Activated T-helper 1 cell treated with anti-CD3 and anti-CD28 coated beads, Interleukin-12 subunit alpha, Interleukin-12 subunit beta, Interleukin-2, Interleukin-4 antibody, amounts not matched to agents 30 ng/mL and 10 ng/mL and 1 ng/mL, durations not matched to agents 14 hours and 24 hours and 36 hours (primary cell): ENCODE measurements at regions of chr11 and their contacts with region 1.

Region 1: DNA sequence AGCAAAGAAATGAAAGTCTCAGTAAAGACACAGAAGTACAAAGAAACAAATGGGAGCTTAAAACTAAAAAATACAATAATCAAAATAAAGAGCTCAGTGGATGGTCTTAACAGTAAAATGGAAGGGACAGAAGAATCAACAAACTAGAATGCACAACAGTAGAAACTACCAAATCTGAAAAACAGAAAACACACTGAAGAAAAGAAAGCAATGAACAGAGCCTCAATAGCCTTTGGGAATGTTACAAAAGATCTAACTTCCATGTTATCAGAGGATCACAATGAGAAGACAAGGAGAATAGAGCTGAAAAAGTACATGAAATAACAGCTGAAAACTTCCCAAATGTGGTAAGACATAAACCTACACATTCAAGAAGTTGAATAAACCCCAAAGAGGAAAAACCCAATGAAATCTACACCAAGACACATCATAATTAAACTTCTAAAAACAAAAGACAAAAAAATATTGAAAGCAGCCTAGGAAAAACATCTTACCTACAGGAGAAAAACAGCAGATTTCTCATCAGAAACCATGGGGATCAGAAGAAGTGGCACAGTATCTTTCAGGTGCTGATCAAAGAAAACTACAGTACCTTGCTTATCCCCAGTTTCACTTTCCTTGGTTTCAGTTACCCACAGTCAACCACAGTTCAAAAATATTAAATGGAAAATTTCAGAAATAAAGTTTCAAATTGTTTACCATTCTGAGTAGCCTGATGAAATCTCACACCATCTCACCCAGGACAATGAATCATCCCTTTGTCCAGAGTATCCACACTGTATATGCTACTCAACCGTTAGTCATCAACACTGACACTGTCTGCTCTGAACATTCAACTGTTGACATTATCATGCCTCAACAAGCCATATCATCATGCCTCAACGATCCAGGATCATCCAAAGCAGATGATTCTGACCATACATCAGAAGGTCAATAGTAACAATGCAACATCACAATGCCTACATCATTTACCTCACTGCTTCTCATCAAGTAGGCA is 22.2 kb downstream of the RRAS2 start:
- DNase-seq: no peak
- H3K4me3 Mint-ChIP-seq: no peak overlapping the region
- H3K27ac Mint-ChIP-seq: peak overlapping the region; percentile 82
- H3K4me1 Mint-ChIP-seq: peaks cover 58% of the 10 kb centered on the region
- H3K27me3 Mint-ChIP-seq: no peaks in the 10 kb centered on the region

Region 2: DNA sequence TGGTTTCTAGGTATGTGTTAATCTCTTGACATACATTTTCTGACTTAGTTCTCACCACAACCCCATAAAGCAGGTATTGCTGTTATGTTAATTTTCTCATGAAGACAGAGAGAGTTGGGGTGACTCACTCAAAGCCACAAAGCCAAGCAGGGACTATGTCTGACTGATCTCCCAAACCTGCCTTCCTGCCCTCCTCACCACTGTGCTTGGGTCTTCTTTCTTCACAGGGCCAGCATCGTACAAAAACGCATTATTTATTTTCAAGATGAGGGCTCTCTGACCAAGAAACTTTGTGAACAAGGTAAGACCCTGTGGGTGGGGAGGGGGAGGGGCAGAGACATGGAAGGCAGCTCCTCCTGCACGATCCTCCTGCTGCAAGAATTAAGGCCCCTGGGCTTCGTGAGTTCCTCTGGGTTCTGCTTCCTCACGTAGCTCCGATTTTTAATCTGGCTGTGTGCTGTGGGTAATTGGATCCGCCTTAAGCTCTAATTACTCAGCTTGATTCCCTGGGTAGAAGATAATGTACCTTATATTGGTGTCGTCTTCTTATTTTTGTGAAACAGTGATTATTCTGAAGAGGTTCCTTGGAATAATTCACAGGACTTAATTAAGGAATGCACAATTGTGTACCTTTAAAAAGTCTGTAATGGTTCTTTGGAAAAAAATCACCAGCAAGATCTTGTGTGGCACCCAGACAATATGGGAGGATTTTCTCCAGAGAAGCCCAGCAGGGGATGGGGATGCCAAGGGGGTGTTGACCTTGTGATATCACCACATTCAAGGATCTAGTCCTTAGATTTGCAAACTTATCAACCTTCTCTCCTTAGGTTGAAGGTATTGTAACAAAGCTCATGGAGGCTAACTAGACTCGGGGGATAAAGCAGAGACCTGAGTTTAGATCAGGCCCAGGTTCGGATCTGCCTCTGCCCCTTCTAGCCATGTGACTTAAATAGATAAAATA is 261.4 kb before region 1 on chr11:
- intact Hi-C with region 1: loop called (anchors 5 kb)
- DNase-seq: peak; percentile 46
- H3K4me3 Mint-ChIP-seq: no peak overlapping the region
- H3K27ac Mint-ChIP-seq: no peak overlapping the region
- H3K4me1 Mint-ChIP-seq: peaks cover 28% of the 10 kb centered on the region
- H3K27me3 Mint-ChIP-seq: peaks cover 21% of the 10 kb centered on the region

Region 3: GRCh38 chr11:14320020-14320419 is 16.8 kb before region 1 on chr11:
- intact Hi-C with region 1: loop called (anchors 1 kb)
- DNase-seq: peak; percentile 34
- H3K4me3 Mint-ChIP-seq: peak overlapping the region; percentile 50
- H3K27ac Mint-ChIP-seq: peak overlapping the region; percentile 44
- H3K4me1 Mint-ChIP-seq: peaks cover 83% of the 10 kb centered on the region
- H3K27me3 Mint-ChIP-seq: no peaks in the 10 kb centered on the region

Region 4: DNA sequence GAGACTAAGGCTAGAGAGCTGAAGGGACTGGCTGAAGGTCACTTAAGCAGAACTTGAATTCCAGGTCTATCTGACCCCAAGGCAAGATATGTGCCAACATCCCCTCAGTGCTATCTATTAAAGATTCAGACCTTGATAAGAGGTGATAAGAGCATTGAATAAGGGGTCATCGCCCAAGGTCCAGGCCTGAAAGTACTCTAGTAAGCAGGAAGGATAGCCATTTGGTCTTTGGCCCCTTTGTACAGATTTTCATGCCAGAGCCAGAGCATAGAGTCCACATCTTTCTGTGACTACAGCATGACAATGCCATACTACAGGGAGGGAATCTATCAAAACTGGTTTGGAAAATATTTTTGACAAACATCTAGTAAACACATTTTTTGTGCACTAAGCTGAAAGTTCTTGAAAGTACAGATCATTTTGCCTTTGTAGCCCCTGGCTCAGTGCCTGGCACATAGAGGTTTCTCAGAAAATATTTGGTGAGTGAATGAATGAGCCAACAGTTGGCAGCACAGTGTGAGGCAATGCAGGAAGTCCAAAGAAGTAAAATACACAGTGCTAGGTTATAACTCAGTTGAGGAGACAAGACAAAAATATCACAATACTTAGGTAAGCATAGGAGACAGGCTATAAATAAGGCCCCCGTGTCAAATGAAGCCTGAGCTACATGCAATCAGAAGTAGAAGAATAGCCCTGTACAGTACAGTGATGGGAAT is 37.3 kb after region 1 on chr11:
- intact Hi-C with region 1: loop called (anchors 1 kb)
- DNase-seq: no peak
- H3K4me3 Mint-ChIP-seq: no peak overlapping the region
- H3K27ac Mint-ChIP-seq: peak overlapping the region; percentile 54
- H3K4me1 Mint-ChIP-seq: peaks cover 60% of the 10 kb centered on the region
- H3K27me3 Mint-ChIP-seq: peaks cover 6% of the 10 kb centered on the region

Region 5: GRCh38 chr11:14413307-14414069 is 76.7 kb after region 1 on chr11:
- intact Hi-C with region 1: loop called (anchors 1 kb)
- DNase-seq: no peak
- H3K4me3 Mint-ChIP-seq: no peak overlapping the region
- H3K27ac Mint-ChIP-seq: no peak overlapping the region
- H3K4me1 Mint-ChIP-seq: peaks cover 79% of the 10 kb centered on the region
- H3K27me3 Mint-ChIP-seq: no peaks in the 10 kb centered on the region

Region 6: DNA sequence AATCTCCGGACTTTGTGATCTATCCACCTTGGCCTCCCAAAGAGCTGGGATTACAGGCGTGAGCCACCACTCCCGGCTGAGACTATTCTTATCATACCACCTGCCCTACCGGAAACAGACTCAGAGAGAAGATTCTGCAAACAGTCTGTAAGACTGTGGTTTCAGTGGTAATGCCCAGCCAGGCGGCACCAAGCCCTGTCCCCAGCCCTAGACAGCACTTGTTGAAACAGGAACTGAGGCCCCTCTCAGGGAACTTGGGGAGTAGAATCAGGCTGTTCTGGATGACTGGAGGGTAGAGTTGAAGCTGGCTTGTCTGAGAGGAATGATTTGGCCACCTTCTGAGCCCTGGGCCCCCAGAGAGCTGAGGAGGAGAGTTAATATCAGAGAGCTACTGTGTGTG is 776.6 kb after region 1 on chr11:
- intact Hi-C with region 1: loop called (anchors 10 kb)
- DNase-seq: no peak
- H3K4me3 Mint-ChIP-seq: peak overlapping the region; percentile 48
- H3K27ac Mint-ChIP-seq: peak overlapping the region; percentile 15
- H3K4me1 Mint-ChIP-seq: peaks cover 49% of the 10 kb centered on the region
- H3K27me3 Mint-ChIP-seq: peaks cover 10% of the 10 kb centered on the region